ENCODE measurements at regions of chr11 and their contacts with region 1.

Region 1: GRCh38 chr11:15852179-15852578 is 504.2 kb downstream of the SOX6 start:
- DNase-seq: peak; percentile 21
- H3K4me3 ChIP-seq: no peak overlapping the region
- H3K27ac ChIP-seq: no peak overlapping the region
- H3K4me1 ChIP-seq: no peaks in the 10 kb centered on the region
- H3K27me3 ChIP-seq: no peaks in the 10 kb centered on the region
- CTCF ChIP-seq: peak; percentile 42 to 73

Region 2: GRCh38 chr11:14821031-14821430 is 1031.1 kb before region 1 on chr11:
- CTCF ChIA-PET with region 1: no interaction called
- dilution Hi-C with region 1: no loop called
- in situ Hi-C with region 1: no loop called
- intact Hi-C with region 1: no loop called
- DNase-seq: no peak
- H3K4me3 ChIP-seq: no peak overlapping the region
- H3K27ac ChIP-seq: no peak overlapping the region
- H3K4me1 ChIP-seq: no peaks in the 10 kb centered on the region
- H3K27me3 ChIP-seq: no peaks in the 10 kb centered on the region
- CTCF ChIP-seq: no peak

Region 3: DNA sequence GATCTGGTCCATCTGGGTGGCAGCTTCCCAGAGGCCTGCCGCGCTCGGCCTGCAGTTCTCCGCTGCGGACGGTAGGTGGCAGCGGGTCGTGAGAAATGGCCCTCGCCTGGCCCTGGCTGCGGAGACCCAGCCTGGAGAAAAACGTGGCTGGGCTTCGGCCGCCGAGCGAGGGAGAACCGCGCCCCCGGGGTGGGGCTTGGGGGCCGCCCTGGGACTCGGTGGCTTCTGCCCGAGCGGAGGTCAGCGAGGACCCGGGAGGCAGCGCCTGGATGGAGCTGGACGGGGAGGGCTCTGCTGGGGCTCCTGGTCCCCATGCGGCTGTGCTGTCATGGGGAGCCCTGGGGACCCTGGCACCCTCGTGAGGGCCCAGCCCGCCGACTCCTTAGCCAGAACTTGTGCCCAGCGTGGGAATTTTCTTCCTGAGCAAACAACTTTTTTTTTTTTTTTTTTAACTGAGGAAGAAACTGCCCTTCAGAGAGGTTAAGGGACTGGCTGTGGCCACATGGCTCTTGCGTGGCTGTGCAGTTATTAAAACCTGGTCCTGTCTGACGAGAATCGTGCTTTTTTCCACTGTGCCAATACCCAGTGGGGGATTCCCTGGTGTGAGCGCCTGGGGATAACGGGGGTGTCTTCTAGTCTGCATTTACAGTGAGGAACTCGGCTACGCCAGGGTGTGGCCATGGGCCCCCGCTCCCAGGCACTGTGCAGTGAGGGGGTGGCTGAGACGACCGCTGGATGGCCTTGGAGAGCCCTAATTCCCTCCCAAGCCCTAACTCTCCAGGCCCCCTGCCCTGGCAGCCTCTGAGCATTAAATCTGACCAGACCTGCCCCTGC is 201.9 kb before region 1 on chr11:
- CTCF ChIA-PET with region 1: no interaction called
- dilution Hi-C with region 1: no loop called
- in situ Hi-C with region 1: no loop called
- intact Hi-C with region 1: loop called (anchors 1 kb)
- DNase-seq: peak; percentile 88
- H3K4me3 ChIP-seq: peak overlapping the region; percentile 32 to 48 (median 35)
- H3K27ac ChIP-seq: peak overlapping the region; percentile 19
- H3K4me1 ChIP-seq: peaks cover 5% of the 10 kb centered on the region
- H3K27me3 ChIP-seq: no peaks in the 10 kb centered on the region
- CTCF ChIP-seq: peak; percentile 78 to 96

Region 4: GRCh38 chr11:16031210-16031609 is 179.0 kb after region 1 on chr11:
- CTCF ChIA-PET with region 1: interaction called, 13 read pairs
- dilution Hi-C with region 1: no loop called
- in situ Hi-C with region 1: no loop called
- intact Hi-C with region 1: no loop called
- DNase-seq: no peak
- H3K4me3 ChIP-seq: no peak overlapping the region
- H3K27ac ChIP-seq: no peak overlapping the region
- H3K4me1 ChIP-seq: no peaks in the 10 kb centered on the region
- H3K27me3 ChIP-seq: no peaks in the 10 kb centered on the region
- CTCF ChIP-seq: no peak

Region 5: GRCh38 chr11:16301462-16301861 is 449.3 kb after region 1 on chr11:
- CTCF ChIA-PET with region 1: no interaction called
- dilution Hi-C with region 1: no loop called
- in situ Hi-C with region 1: no loop called
- intact Hi-C with region 1: no loop called
- DNase-seq: peak; percentile 46
- H3K4me3 ChIP-seq: no peak overlapping the region
- H3K27ac ChIP-seq: no peak overlapping the region
- H3K4me1 ChIP-seq: no peaks in the 10 kb centered on the region
- H3K27me3 ChIP-seq: no peaks in the 10 kb centered on the region
- CTCF ChIP-seq: no peak

Measured in mammary epithelial cell (primary cell).